ENCODE measurements at regions of chr2 and their contacts with region 1.

Region 1: GRCh38 chr2:11129598-11130449 is 25.4 kb upstream of the SLC66A3 start:
- DNase-seq: peak; percentile 89
- H3K4me3 ChIP-seq: peak overlapping the region; percentile 50
- H3K27ac ChIP-seq: no peak overlapping the region
- H3K4me1 ChIP-seq: peaks cover 27% of the 10 kb centered on the region
- CTCF ChIP-seq: peak; percentile 78

Region 2: DNA sequence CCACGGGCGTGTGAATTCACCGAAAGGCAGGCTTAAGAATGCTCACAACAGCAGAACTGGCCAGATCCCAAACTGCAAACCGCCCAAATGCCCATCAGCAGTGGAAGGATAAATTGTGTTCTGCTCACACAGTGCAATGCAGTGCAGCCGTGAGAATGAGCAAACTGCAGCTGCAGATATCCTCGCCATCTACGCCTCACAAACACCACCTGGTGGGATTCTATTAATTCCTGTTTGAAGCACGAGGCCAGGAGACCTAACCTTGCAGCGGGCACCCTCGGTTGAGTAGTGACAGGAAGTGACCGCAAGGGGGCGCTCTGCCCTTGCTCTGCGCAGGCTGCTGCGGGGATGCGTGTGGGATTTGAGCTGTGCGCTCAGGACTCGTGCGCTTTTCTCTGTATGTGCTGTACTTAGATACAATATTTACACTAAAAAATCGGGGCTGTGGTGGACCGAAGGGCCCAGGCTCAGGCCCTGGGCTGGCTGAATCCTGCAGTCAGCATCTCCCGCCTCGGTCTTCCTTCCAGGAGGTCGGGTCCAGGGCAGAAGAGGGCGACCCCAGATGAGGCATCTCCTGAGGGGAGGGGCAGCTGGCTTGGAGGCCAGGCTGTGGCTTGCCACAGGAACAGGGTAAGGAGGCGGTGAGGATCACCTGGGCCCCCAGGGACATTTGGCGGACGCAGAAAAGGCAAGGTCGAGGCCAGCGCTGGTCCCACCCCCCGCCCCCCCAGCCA is 297.5 kb before region 1 on chr2:
- CTCF ChIA-PET with region 1: interaction called, 3 read pairs
- POLR2A ChIA-PET with region 1: no interaction called
- intact Hi-C with region 1: loop called (anchors 2 kb)
- DNase-seq: peak; percentile 87
- H3K4me3 ChIP-seq: no peak overlapping the region
- H3K27ac ChIP-seq: no peak overlapping the region
- H3K4me1 ChIP-seq: peaks cover 3% of the 10 kb centered on the region
- CTCF ChIP-seq: peak; percentile 98

Region 3: DNA sequence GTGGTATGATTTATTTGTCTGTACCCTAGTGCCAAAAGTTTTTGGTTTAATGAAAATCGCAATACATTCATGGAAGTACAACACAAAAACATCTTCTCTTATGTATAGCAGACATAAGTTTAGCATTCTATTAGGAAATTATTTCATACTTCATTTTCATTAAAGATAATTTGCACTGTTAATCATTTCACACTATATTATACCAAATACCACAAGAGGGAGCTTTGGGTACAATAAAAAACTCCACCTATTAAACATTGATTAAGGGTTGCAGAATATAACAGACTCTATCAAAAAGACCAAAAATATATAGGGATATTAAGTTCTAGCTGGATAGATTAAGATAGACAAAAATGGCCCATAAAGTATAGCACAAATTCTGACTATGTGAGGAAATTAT is 104.5 kb after region 1 on chr2:
- CTCF ChIA-PET with region 1: no interaction called
- POLR2A ChIA-PET with region 1: no interaction called
- intact Hi-C with region 1: loop called (anchors 2 kb)
- DNase-seq: peak; percentile 20
- H3K4me3 ChIP-seq: no peak overlapping the region
- H3K27ac ChIP-seq: no peak overlapping the region
- H3K4me1 ChIP-seq: peaks cover 12% of the 10 kb centered on the region
- CTCF ChIP-seq: peak; percentile 92

Region 4: DNA sequence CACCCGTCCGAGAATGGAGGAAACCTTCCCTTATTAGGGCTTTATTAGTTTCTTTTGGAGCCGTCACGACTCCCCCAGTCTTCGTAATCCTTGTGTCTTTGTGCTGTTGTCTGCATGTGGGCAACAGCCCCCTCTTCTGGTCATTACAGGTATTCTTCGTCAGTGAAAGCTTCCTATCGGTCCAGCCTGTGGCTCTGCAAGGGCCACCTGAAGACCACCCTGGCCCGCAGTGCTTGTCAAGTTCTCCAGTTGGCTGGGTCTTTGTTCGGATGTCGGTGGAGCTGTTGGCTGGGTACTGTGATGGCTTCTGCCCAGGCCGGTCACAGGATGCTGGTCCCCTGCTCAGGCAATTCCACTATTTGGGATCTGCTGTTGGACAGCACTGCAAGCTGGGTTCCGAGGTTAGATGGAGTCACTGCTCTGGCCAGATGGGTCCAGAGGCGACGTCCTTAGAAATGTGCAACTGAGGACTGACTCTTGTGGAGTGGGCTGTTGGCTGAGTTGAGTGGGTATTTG is 317.0 kb after region 1 on chr2:
- CTCF ChIA-PET with region 1: interaction called, 10 read pairs
- POLR2A ChIA-PET with region 1: no interaction called
- intact Hi-C with region 1: no loop called
- DNase-seq: peak; percentile 57
- H3K4me3 ChIP-seq: no peak overlapping the region
- H3K27ac ChIP-seq: no peak overlapping the region
- H3K4me1 ChIP-seq: no peaks in the 10 kb centered on the region
- CTCF ChIP-seq: peak; percentile 92

Region 5: DNA sequence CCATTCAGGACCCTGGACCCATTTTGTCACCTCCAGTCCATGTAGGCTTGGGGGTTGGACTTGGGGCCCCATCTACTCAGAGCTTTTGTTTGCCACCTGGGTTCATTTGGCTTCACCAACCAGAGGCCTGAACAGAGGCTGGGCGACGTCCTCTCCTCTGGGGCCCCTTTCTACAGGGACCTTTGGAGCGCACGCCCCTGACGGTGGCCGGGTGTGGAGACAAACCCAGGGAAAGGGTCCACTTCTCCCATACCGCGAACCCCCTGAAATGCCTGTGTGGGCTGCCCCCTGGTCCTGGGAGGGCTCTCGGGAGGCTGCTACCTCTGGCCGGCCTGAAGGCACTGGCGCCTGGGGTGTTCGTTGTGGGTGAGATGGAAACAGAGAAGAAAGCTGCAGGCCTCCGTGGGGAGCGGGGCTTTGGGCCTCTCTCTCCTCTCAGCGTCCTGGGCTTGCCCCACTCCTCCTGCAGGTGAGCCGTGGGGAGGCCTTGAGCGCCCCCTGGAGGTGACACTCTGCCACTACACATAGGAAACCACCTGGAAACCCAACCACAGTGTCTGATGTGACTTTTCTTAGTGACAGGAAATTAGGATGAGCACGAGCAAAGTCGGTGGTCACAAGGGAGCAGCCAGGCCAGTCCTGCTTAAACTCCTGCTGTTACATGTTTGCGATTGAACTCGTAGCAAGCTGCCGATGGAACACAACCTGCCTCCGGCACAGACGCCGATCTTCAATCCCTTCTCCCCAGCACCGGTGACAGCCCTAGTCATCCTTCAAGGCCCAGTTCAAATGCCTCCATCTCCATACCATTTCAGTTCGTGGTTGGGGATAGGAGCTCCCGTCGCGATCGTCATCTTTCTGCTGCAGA is 552.1 kb after region 1 on chr2:
- CTCF ChIA-PET with region 1: no interaction called
- POLR2A ChIA-PET with region 1: no interaction called
- intact Hi-C with region 1: loop called (anchors 5 kb)
- DNase-seq: peak; percentile 38
- H3K4me3 ChIP-seq: no peak overlapping the region
- H3K27ac ChIP-seq: no peak overlapping the region
- H3K4me1 ChIP-seq: no peaks in the 10 kb centered on the region
- CTCF ChIP-seq: peak; percentile 94